ENCODE measurements at regions of chr17 and their contacts with region 1.

Region 1: GRCh38 chr17:13114601-13115031 is 96.8 kb upstream of the ELAC2 start:
- DNase-seq: peak; percentile 24
- H3K4me3 ChIP-seq: peak overlapping the region; percentile 29
- H3K27ac ChIP-seq: no peak overlapping the region
- H3K27me3 ChIP-seq: peaks cover 12% of the 10 kb centered on the region
- CTCF ChIP-seq: peak; percentile 92

Region 2: GRCh38 chr17:13086142-13086769 is 28.4 kb before region 1 on chr17:
- CTCF ChIA-PET with region 1: no interaction called
- POLR2A ChIA-PET with region 1: no interaction called
- DNase-seq: no peak
- H3K4me3 ChIP-seq: no peak overlapping the region
- H3K27ac ChIP-seq: no peak overlapping the region
- H3K27me3 ChIP-seq: no peaks in the 10 kb centered on the region
- CTCF ChIP-seq: no peak

Region 3: GRCh38 chr17:13099089-13099735 is 15.4 kb before region 1 on chr17:
- CTCF ChIA-PET with region 1: interaction called, 11 read pairs
- POLR2A ChIA-PET with region 1: no interaction called
- DNase-seq: no peak
- H3K4me3 ChIP-seq: no peak overlapping the region
- H3K27ac ChIP-seq: no peak overlapping the region
- H3K27me3 ChIP-seq: no peaks in the 10 kb centered on the region
- CTCF ChIP-seq: no peak

Region 4: GRCh38 chr17:13129356-13129755 is 14.7 kb after region 1 on chr17:
- CTCF ChIA-PET with region 1: interaction called, 19 read pairs
- POLR2A ChIA-PET with region 1: no interaction called
- DNase-seq: no peak
- H3K4me3 ChIP-seq: no peak overlapping the region
- H3K27ac ChIP-seq: no peak overlapping the region
- H3K27me3 ChIP-seq: no peaks in the 10 kb centered on the region
- CTCF ChIP-seq: no peak

Region 5: GRCh38 chr17:13306310-13306962 is 191.8 kb after region 1 on chr17:
- CTCF ChIA-PET with region 1: no interaction called
- POLR2A ChIA-PET with region 1: no interaction called
- DNase-seq: peak; percentile 46
- H3K4me3 ChIP-seq: no peak overlapping the region
- H3K27ac ChIP-seq: no peak overlapping the region
- H3K27me3 ChIP-seq: no peaks in the 10 kb centered on the region
- CTCF ChIP-seq: peak; percentile 62

Region 6: DNA sequence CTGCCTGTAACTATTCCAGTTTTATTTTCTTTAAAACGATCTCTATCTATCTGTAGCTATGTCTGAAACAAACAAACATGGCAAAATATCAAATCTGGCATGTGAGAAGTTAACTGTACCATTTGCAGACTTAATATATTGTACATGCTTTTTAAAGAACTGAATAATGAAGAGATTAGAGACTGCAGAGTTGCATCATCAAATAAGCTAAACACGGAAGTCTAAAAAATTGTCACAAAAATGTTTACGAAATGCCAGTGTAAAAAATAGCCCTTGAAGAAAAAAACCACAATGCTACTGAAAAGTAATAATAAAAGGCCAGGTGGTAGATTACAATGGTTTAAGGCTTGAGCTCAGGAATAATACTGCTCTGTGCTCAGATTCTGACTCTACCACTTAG is 444.0 kb after region 1 on chr17:
- CTCF ChIA-PET with region 1: no interaction called
- POLR2A ChIA-PET with region 1: interaction called, 11 read pairs
- DNase-seq: no peak
- H3K4me3 ChIP-seq: no peak overlapping the region
- H3K27ac ChIP-seq: no peak overlapping the region
- H3K27me3 ChIP-seq: no peaks in the 10 kb centered on the region
- CTCF ChIP-seq: no peak

Measured in AG04450 (cell line).